Left ventricle myocardium inferior (tissue), 1 donor: ENCODE measurements at regions of chr1 and their contacts with region 1.

Region 1: DNA sequence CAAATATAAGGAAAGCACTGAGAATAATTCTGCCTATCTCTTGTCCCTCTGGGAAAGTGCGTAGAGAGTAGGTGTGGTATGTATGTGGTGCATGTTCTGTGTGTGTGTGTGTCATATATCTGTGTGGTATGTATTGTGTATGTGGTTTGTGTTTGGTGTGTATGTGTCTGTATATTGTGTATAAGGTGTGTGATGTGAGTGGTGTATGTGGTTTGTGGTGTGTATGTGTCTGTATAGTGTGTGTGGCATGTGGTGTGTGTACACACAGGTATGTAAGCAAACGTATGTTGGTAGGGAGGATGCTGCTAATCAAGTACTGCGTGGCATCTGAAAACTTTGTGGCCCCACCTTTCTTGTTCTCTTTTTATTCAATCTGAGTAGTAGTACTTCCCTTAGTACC is 68.3 kb upstream of the LAX1 start:
- DNase-seq: no peak
- H3K4me3 ChIP-seq: no peak overlapping the region
- H3K27ac ChIP-seq: peak overlapping the region; percentile 36
- H3K4me1 ChIP-seq: peaks cover 69% of the 10 kb centered on the region
- H3K27me3 ChIP-seq: no peaks in the 10 kb centered on the region
- CTCF ChIP-seq: no peak

Region 2: GRCh38 chr1:203306967-203307541 is 389.6 kb before region 1 on chr1:
- intact Hi-C with region 1: no loop called
- DNase-seq: no peak
- H3K4me3 ChIP-seq: peak overlapping the region; percentile 94
- H3K27ac ChIP-seq: peak overlapping the region; percentile 99
- H3K4me1 ChIP-seq: peaks cover 63% of the 10 kb centered on the region
- H3K27me3 ChIP-seq: no peaks in the 10 kb centered on the region
- CTCF ChIP-seq: no peak

Region 3: GRCh38 chr1:203493901-203494300 is 202.8 kb before region 1 on chr1 and contains the start of gene OPTC:
- intact Hi-C with region 1: no loop called
- DNase-seq: no peak
- H3K4me3 ChIP-seq: no peak within 1 kb of the TSS
- H3K27ac ChIP-seq: no peak within 1 kb of the TSS
- H3K4me1 ChIP-seq: no peaks in the 10 kb centered on the region
- H3K27me3 ChIP-seq: no peaks in the 10 kb centered on the region
- CTCF ChIP-seq: no peak
- total RNA-seq, gene OPTC: not detected

Region 4: DNA sequence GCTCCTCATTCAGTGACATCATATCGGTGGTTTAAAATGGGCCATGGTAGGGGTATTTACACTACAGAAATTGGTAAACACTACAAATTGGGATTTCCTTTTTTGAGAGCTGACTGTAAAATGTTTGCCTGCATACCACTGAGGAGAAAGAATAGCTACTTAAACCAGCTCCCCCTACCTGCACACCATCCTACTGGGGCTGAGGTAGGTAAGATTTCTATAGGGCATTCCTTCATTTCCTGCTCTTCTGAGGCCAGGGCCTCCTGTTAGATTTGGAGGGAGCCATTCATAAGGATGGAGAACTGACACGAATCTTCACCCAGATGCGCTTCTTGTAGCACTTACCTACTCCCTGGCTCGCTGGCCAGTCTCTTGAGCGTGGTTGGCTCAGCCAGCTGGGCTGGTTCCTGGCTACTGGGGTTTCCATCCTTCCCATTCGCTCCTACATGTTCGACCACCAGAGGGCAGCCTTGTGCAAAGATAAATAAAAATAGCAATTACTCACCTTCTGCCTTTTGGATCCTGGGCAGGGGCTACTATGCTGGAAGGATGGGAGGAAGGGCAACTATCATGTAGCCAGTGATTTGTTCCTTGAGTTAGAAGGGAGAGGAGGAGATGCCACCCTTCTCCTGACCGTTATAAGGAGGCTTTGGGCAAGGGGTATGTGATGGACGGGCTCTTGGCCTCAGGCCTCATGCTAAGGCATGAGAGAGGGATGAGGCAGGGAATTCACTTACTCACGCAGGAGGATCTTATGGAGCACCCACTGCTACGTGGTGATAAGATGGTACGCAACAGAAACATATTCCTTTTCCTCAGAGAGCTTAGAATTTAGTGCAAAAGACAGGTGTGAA is 192.0 kb before region 1 on chr1:
- intact Hi-C with region 1: loop called (anchors 2 kb)
- DNase-seq: peak; percentile 80
- H3K4me3 ChIP-seq: no peak overlapping the region
- H3K27ac ChIP-seq: no peak overlapping the region
- H3K4me1 ChIP-seq: peaks cover 42% of the 10 kb centered on the region
- H3K27me3 ChIP-seq: no peaks in the 10 kb centered on the region
- CTCF ChIP-seq: peak; percentile 90

Region 5: DNA sequence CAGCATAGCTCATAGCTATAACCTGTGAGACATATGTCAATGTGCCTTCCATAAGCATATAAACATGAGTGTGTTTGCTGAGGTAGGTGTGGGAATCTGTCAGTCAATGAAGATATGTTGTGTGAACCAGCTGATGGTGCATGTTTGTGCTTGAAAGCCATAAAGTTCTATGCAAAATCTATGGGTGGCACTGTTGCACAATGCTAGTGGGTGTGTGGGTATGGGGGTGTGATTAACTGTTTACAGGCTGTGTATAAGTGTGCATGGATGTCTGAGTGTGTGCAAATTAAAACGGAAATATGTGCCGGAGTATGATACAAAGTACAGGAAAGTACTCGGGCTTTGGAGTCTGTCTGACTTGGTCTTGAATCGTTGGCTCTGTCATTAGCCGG is 71.0 kb before region 1 on chr1:
- intact Hi-C with region 1: loop called (anchors 2 kb)
- DNase-seq: no peak
- H3K4me3 ChIP-seq: no peak overlapping the region
- H3K27ac ChIP-seq: peak overlapping the region; percentile 96
- H3K4me1 ChIP-seq: peaks cover 59% of the 10 kb centered on the region
- H3K27me3 ChIP-seq: no peaks in the 10 kb centered on the region
- CTCF ChIP-seq: peak; percentile 60